ENCODE measurements at regions of chr21 and their contacts with region 1.

Region 1: DNA sequence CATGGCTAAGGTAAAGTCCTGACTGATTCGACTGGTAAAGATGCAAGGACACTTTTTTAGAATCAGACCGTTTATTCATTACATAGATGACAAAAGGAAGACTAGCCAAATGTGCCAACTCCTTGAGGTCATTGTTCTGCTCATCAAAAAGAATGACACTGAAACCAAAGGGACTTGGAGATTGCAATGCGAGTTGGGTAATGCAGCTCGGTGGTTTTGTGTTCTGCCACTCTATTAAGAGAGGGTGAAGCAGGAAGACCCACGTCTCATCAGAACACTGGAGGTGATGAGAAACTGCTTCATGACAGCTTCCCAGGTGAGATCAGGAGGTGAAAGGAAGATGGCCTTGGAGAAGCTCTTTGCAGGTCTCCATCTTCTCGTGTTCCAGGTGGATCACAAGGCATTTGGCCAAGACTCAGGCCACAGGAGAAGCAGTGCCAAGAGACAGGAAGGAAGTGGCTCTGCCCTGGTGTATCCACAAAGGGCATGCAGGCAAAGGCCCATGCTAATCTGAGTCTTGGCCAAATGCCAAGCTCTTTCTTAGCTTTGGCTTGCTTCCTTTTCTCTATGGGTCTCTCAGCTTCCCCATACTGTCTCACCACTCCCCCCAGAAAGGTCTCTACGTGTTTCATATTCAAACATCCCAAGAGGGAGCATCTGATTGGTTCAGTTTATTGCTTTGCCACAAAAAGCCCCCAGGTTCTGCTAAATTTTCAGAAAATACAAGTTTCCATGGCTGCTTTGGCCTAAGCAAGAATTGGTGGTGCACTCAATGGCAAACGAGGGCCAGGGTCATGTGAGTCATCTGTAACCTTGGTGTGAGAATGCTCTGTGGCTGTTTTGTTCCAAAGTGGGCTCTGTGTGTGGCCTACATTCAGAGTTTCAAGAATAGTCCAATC is 5.7 kb upstream of the CCT8 start:
- DNase-seq: peak; percentile 18
- ATAC-seq: peak; percentile 51
- H3K4me3 Mint-ChIP-seq: peak overlapping the region; percentile 28
- H3K27ac Mint-ChIP-seq: peak overlapping the region; percentile 82
- H3K4me1 Mint-ChIP-seq: peaks cover 49% of the 10 kb centered on the region
- H3K27me3 Mint-ChIP-seq: no peaks in the 10 kb centered on the region
- CTCF ChIP-seq: no peak

Region 2: DNA sequence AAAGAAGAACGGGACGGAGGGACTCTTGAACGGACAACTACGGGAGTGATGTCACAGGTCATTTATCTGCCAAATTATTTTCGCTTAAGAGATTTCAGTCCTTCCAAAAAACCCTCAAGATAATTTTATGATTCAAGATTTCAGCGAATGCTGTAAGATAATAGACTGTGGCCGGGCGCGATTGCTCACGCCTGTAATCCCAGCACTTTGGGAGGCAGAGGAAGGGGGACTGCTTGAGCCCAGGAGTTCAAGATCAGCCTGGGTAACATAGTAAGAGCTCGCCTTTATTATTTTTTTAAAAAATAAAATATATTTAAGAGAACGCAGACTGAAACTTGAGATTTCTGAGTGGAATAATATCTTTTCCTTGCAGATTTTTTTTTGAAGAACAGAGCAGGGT is 60.6 kb before region 1 on chr21:
- CTCF ChIA-PET with region 1: no interaction called
- POLR2A ChIA-PET with region 1: interaction called, 47 read pairs
- intact Hi-C with region 1: no loop called
- DNase-seq: no peak
- ATAC-seq: peak; percentile 17
- H3K4me3 Mint-ChIP-seq: peak overlapping the region; percentile 92
- H3K27ac Mint-ChIP-seq: peak overlapping the region; percentile 94
- H3K4me1 Mint-ChIP-seq: peaks cover 29% of the 10 kb centered on the region
- H3K27me3 Mint-ChIP-seq: no peaks in the 10 kb centered on the region
- CTCF ChIP-seq: no peak

Region 3: DNA sequence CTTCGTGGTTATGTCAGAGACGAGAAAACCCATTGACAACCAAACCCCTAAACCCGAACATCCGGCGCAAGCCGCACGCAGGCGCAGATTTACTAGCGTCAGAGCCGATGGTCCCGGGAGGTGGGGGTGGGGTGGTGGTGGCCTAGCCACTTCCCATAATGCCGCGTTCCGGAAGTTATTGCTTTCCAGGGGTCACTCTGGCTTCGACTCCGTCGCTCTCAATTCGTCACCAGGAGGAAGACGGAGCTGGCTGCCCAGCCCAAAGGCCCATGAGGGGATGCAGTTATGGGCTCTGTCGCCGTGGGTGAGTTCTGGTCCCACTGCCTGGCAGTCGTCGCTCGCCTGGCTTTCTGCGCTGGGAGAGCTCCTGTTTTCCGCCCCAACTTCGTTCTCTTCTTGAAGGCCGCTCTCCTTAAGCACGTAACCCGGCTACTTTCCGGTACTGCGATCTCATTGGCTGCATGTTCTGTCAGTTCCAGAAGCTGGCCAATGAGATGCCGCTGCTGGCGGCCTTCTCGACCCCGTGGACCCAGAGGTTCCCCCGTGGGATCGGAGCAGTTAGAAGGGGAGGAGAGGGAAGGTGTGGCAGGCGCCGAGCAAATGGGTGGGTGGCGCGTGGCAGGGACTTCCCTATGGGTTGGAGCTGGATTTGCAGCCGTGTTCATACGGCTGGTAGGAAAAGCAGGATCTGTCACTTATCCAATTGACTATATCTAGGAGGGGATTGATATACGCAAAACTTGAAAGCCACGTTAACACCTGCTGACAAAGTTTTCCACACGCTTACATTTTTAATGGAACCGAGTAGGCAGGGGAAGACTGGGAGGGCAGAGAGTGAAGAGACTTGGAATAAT is 54.4 kb before region 1 on chr21 and contains the start of gene USP16:
- CTCF ChIA-PET with region 1: no interaction called
- POLR2A ChIA-PET with region 1: interaction called, 47 read pairs
- intact Hi-C with region 1: no loop called
- DNase-seq: peak; percentile 94
- ATAC-seq: peak; percentile 93
- H3K4me3 Mint-ChIP-seq: peak within 1 kb of the TSS; percentile 98
- H3K27ac Mint-ChIP-seq: peak within 1 kb of the TSS; percentile 98
- H3K4me1 Mint-ChIP-seq: peaks cover 45% of the 10 kb centered on the region
- H3K27me3 Mint-ChIP-seq: no peaks in the 10 kb centered on the region
- CTCF ChIP-seq: no peak
- total RNA-seq, gene USP16: 53.2 and 54.6 TPM in 2 replicates

Region 4: GRCh38 chr21:29104239-29104708 is 25.2 kb after region 1 on chr21:
- CTCF ChIA-PET with region 1: no interaction called
- POLR2A ChIA-PET with region 1: interaction called, 5 read pairs
- intact Hi-C with region 1: loop called (anchors 1 kb)
- DNase-seq: no peak
- ATAC-seq: no peak
- H3K4me3 Mint-ChIP-seq: no peak overlapping the region
- H3K27ac Mint-ChIP-seq: no peak overlapping the region
- H3K4me1 Mint-ChIP-seq: peaks cover 11% of the 10 kb centered on the region
- H3K27me3 Mint-ChIP-seq: no peaks in the 10 kb centered on the region
- CTCF ChIP-seq: no peak

Measured in activated B cell treated with CpG ODN at 0.5 μM for 24 hours (primary cell).